ENCODE measurements at regions of chr4 and their contacts with region 1.

Region 1: DNA sequence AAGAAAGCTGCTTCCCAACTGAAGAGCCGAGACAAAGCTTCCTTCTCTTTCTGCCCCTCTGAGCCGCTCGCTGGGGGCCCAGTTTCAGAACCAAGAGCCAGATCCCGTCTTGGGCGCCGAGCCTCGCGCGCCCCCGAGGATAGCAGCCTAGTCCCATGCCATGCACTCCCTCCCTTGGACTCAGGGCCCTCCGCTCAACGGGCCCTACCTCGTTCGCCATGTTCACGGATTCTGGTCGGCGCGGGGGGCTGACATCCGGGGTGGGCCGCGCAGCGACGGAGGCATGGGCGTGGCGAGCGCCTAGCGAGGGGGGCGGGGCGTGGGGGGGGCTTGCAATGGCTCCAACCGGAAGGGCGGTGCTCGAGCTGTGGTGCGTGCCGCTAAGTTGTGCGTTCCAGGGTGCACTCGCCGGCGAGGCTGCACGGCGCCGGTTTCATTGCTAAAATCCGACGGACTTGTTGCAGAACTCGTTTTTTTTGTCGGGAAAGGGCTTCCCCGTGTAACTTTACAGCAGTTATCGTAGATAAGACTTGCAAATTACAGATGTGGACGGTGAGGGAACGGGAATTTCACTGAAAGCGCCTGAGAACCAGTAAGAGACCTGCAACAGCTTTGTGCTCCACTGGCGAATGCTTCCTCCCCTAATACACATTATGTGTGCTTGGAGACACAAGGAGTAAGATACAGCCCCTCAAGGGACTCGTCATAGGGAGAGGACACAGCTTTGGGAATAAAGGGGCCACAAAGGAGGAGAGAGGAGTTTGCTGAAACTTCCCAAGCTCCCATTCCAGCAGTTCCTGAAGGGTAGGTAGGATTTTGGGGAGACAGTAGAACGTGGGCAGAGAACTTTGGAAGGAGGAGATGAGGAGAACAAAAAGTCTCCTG is at the start of gene ADH5:
- DNase-seq: peak; percentile 96
- ATAC-seq: peak; percentile 97
- H3K4me3 Mint-ChIP-seq: peak within 1 kb of the TSS; percentile 98
- H3K27ac Mint-ChIP-seq: peak within 1 kb of the TSS; percentile 99
- H3K4me1 Mint-ChIP-seq: peaks cover 42% of the 10 kb centered on the region
- H3K27me3 Mint-ChIP-seq: no peaks in the 10 kb centered on the region
- total RNA-seq, gene ADH5: 81.3 to 119 TPM

Region 2: DNA sequence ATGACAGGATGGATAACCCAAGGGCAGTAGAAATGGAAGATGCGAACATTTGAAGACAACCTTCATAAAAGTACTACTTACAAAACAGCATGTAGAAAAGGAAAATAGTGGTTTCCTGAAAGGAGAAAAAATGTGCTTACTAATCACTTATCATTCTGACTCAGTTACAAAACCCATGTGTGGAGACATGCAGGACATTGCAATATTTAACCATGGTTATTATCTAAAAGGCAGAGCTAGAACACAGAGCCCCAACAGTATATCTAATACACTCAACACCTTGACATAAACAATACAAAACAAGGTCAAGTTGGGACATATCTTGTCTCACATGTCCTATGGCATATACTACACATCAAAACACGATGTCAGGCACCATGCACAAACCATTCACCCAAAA is 215.7 kb before region 1 on chr4:
- CTCF ChIA-PET with region 1: no interaction called
- POLR2A ChIA-PET with region 1: no interaction called
- intact Hi-C with region 1: no loop called
- DNase-seq: no peak
- ATAC-seq: no peak
- H3K4me3 Mint-ChIP-seq: no peak overlapping the region
- H3K27ac Mint-ChIP-seq: no peak overlapping the region
- H3K4me1 Mint-ChIP-seq: peaks cover 8% of the 10 kb centered on the region
- H3K27me3 Mint-ChIP-seq: no peaks in the 10 kb centered on the region

Region 3: DNA sequence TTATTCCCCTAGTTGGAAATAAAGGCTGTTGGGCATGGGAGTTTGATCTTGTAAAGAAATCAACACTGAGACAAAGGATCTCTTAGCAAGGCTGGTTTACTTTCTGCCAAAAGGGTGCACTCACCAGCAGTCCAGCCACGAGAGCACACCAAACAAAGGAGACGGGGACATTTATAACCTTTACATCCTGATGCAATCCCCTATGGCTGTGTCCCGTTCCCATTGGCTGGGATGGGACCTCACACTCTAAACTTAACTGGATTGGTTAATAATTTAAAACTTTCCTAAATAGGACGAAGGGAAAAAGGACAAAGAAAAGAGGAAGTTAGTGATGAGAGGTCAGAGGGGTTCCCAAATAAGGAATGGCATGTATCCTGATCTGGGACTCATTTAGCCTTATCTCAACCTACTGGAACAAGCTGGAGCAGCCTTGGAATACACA is 75.3 kb before region 1 on chr4:
- CTCF ChIA-PET with region 1: no interaction called
- POLR2A ChIA-PET with region 1: no interaction called
- intact Hi-C with region 1: no loop called
- DNase-seq: no peak
- ATAC-seq: no peak
- H3K4me3 Mint-ChIP-seq: no peak overlapping the region
- H3K27ac Mint-ChIP-seq: no peak overlapping the region
- H3K4me1 Mint-ChIP-seq: peaks cover 14% of the 10 kb centered on the region
- H3K27me3 Mint-ChIP-seq: no peaks in the 10 kb centered on the region

Region 4: GRCh38 chr4:99894161-99894997 is 805.7 kb after region 1 on chr4 and contains the start of gene LAMTOR3:
- CTCF ChIA-PET with region 1: no interaction called
- POLR2A ChIA-PET with region 1: no interaction called
- intact Hi-C with region 1: loop called (anchors 1 to 5 kb)
- DNase-seq: peak; percentile 94
- ATAC-seq: peak; percentile 100
- H3K4me3 Mint-ChIP-seq: peak within 1 kb of the TSS; percentile 96
- H3K27ac Mint-ChIP-seq: peak within 1 kb of the TSS; percentile 94
- H3K4me1 Mint-ChIP-seq: peaks cover 32% of the 10 kb centered on the region
- H3K27me3 Mint-ChIP-seq: no peaks in the 10 kb centered on the region
- total RNA-seq, gene LAMTOR3: 28.5 to 30.4 TPM